Head of caudate nucleus (tissue), 42 donors: ENCODE measurements at regions of chr6 and their contacts with region 1.

Region 1: GRCh38 chr6:160930547-160931377 is 60.8 kb upstream of the MAP3K4 start:
- DNase-seq: peak; percentile 55 to 91 (median 84)

Region 2: DNA sequence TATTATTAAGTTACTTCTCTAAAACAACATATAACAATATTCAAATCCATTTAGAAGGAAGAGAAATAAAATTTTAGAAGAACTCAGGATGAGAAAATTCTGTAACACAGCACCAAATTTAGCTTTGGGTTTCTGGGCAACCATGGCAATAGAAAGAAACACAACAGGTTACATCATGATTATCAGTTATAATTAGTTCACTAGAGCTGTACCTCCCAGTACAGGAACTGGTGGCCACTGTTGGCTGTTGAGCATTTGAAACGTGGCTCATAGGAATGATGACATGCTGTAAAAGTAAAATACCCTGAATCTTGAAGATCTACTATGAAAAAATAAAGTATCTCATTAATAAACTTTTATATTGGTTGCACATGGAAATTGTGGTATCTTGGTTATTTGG is 37.1 kb after region 1 on chr6:
- intact Hi-C with region 1: no loop called
- DNase-seq: no peak

Region 3: GRCh38 chr6:160992061-160992979 is 61.6 kb after region 1 on chr6:
- intact Hi-C with region 1: loop called (anchors 5 kb)
- DNase-seq: peak in 41 of 42 donors; percentile 18 to 81 (median 59)